MCF 10A (cell line): ENCODE measurements at regions of chr18 and their contacts with region 1.

Region 1: GRCh38 chr18:35497370-35498197 is at the start of gene INO80C:
- DNase-seq: peak; percentile 95
- H3K4me3 Mint-ChIP-seq: peak within 1 kb of the TSS; percentile 87
- H3K27ac Mint-ChIP-seq: peak within 1 kb of the TSS; percentile 97
- H3K4me1 Mint-ChIP-seq: peaks cover 34% of the 10 kb centered on the region
- H3K27me3 Mint-ChIP-seq: no peaks in the 10 kb centered on the region
- CTCF ChIP-seq: no peak
- total RNA-seq, gene INO80C: 25.8 and 32.6 TPM in 2 replicates

Region 2: DNA sequence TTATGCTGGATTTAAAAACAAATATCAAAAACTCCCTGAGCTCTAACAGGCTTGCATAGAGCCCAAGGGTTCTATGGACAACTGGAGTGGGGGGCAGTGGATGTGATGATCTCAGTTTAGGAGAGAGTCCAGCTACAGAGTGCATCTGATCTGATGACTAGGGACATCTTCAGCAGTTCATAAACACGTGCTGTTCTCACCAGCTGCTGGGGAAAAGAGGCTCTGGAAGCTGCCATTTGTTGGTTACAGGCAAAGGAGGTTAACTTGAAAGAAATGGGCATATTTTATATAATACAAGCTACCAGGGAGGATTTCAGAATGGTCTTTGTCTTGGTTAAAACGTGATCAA is 84.4 kb before region 1 on chr18:
- CTCF ChIA-PET with region 1: interaction called, 7 read pairs
- POLR2A ChIA-PET with region 1: interaction called, 19 read pairs
- intact Hi-C with region 1: loop called (anchors 1 kb)
- DNase-seq: no peak
- H3K4me3 Mint-ChIP-seq: no peak overlapping the region
- H3K27ac Mint-ChIP-seq: peak overlapping the region; percentile 64
- H3K4me1 Mint-ChIP-seq: peaks cover 37% of the 10 kb centered on the region
- H3K27me3 Mint-ChIP-seq: no peaks in the 10 kb centered on the region
- CTCF ChIP-seq: no peak

Region 3: GRCh38 chr18:35459005-35459441 is 38.6 kb before region 1 on chr18:
- CTCF ChIA-PET with region 1: no interaction called
- POLR2A ChIA-PET with region 1: interaction called, 87 read pairs
- intact Hi-C with region 1: loop called (anchors 1 kb)
- DNase-seq: peak; percentile 74
- H3K4me3 Mint-ChIP-seq: no peak overlapping the region
- H3K27ac Mint-ChIP-seq: peak overlapping the region; percentile 72
- H3K4me1 Mint-ChIP-seq: peaks cover 73% of the 10 kb centered on the region
- H3K27me3 Mint-ChIP-seq: no peaks in the 10 kb centered on the region
- CTCF ChIP-seq: no peak

Region 4: DNA sequence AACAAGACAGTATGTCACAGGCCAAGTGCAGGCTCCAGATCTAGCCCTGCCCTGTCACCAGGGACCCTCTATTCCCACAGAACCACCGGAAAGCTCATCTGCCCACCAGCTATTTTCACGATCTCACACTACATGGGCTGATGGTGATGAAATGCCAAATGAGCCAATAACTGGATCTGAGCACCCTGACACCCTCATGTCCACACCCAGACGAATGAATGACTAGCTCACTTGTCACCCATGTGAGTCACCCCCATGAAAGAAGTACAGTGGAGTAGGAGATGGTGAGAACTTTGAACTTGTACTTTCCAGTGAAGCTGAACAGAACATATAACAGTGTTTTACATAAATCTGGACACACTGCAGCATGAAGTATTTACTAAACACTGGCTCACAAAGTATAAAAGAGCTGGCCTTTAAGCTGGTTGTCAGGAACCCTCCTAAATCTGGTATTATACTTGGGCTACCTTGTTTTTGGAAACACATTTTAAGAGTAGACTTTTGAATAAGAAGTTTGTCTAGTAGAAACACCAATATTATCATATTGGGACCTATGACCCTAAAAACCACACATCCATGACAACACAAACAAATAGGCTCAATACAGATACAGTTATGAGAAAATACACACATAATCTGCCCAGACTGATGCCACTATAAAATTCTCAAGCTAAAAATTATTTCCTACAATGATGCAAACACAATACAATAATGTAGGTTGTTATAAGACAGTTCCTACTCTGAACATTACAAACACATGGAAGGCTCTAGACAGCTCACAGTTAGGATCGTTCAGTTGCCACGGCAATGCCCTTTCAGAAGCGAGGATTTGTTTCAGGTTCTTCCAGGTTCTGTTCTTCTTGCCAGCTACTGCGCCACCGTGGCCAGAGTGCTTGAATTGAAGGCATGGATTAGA is 18.8 kb before region 1 on chr18:
- CTCF ChIA-PET with region 1: interaction called, 5 read pairs
- POLR2A ChIA-PET with region 1: interaction called, 134 read pairs
- intact Hi-C with region 1: no loop called
- DNase-seq: peak; percentile 97
- H3K4me3 Mint-ChIP-seq: peak overlapping the region; percentile 61
- H3K27ac Mint-ChIP-seq: peak overlapping the region; percentile 86
- H3K4me1 Mint-ChIP-seq: peaks cover 45% of the 10 kb centered on the region
- H3K27me3 Mint-ChIP-seq: no peaks in the 10 kb centered on the region
- CTCF ChIP-seq: no peak

Region 5: GRCh38 chr18:35513181-35513936 is 15.8 kb after region 1 on chr18:
- CTCF ChIA-PET with region 1: interaction called, 4 read pairs
- POLR2A ChIA-PET with region 1: interaction called, 30 read pairs
- intact Hi-C with region 1: no loop called
- DNase-seq: peak; percentile 86
- H3K4me3 Mint-ChIP-seq: peak overlapping the region; percentile 22
- H3K27ac Mint-ChIP-seq: peak overlapping the region; percentile 89
- H3K4me1 Mint-ChIP-seq: peaks cover 39% of the 10 kb centered on the region
- H3K27me3 Mint-ChIP-seq: no peaks in the 10 kb centered on the region
- CTCF ChIP-seq: no peak

Region 6: GRCh38 chr18:35526476-35527120 is 29.0 kb after region 1 on chr18:
- CTCF ChIA-PET with region 1: interaction called, 4 read pairs
- POLR2A ChIA-PET with region 1: interaction called, 12 read pairs
- intact Hi-C with region 1: no loop called
- DNase-seq: peak; percentile 85
- H3K4me3 Mint-ChIP-seq: peak overlapping the region; percentile 64
- H3K27ac Mint-ChIP-seq: peak overlapping the region; percentile 24
- H3K4me1 Mint-ChIP-seq: peaks cover 22% of the 10 kb centered on the region
- H3K27me3 Mint-ChIP-seq: no peaks in the 10 kb centered on the region
- CTCF ChIP-seq: no peak

Region 7: DNA sequence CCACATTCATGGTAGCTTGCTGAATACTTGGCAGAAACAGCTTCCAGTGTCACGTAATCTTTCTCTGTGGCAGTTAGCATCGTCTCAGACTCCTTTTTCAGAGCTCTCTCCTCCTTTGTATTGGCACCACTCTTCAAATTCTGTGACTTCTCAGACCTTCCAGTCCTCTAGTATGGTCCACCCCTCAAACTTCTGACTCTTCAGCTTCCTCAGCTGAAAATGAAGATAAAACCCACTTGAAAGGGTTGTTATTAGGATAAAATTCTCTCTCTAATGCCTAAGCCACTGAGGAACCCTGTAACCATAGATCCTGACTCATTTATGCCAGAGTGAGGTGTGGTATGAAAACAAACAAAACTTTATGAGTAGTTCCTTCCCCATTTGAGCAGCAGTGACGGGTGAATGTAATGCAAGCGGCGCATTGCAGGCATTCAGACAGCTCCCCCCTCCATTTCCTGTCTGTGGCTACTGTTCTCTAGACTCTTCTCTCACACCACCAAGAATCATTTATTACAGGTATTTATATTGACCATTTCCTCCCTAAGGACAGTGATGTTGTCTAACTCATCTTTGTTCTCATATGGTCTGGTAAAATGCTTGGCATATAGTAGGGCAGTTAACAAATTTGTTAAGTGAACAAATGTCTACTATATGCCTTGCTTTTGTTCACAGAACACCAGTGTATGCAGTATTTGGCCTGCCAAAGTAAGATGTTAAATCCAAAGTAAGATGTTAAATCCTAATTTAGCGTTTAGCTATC is 119.3 kb after region 1 on chr18:
- CTCF ChIA-PET with region 1: no interaction called
- POLR2A ChIA-PET with region 1: interaction called, 8 read pairs
- intact Hi-C with region 1: loop called (anchors 1 kb)
- DNase-seq: peak; percentile 89
- H3K4me3 Mint-ChIP-seq: no peak overlapping the region
- H3K27ac Mint-ChIP-seq: no peak overlapping the region
- H3K4me1 Mint-ChIP-seq: peaks cover 24% of the 10 kb centered on the region
- H3K27me3 Mint-ChIP-seq: no peaks in the 10 kb centered on the region
- CTCF ChIP-seq: no peak